CD8-positive, alpha-beta T cell (primary cell): ENCODE measurements at regions of chr6 and their contacts with region 1.

Region 1: GRCh38 chr6:112979830-112980229 is 632.7 kb downstream of the RFPL4B start:
- DNase-seq: no peak
- ATAC-seq: no peak
- H3K4me3 ChIP-seq: no peak overlapping the region
- H3K4me3 Mint-ChIP-seq: no peak overlapping the region
- H3K27ac ChIP-seq: no peak overlapping the region
- H3K27ac Mint-ChIP-seq: no peak overlapping the region
- H3K4me1 ChIP-seq: no peaks in the 10 kb centered on the region
- H3K4me1 Mint-ChIP-seq: no peaks in the 10 kb centered on the region
- H3K27me3 ChIP-seq: no peaks in the 10 kb centered on the region
- H3K27me3 Mint-ChIP-seq: no peaks in the 10 kb centered on the region
- CTCF ChIP-seq: no peak

Region 2: GRCh38 chr6:112936079-112936871 is 43.6 kb before region 1 on chr6:
- CTCF ChIA-PET with region 1: no interaction called
- POLR2A ChIA-PET with region 1: no interaction called
- intact Hi-C with region 1: loop called in 1 of 2 experiments (anchors 1 kb)
- DNase-seq: no peak
- ATAC-seq: no peak
- H3K4me3 ChIP-seq: no peak overlapping the region
- H3K4me3 Mint-ChIP-seq: no peak overlapping the region
- H3K27ac ChIP-seq: no peak overlapping the region
- H3K27ac Mint-ChIP-seq: no peak overlapping the region
- H3K4me1 ChIP-seq: no peaks in the 10 kb centered on the region
- H3K4me1 Mint-ChIP-seq: no peaks in the 10 kb centered on the region
- H3K27me3 ChIP-seq: no peaks in the 10 kb centered on the region
- H3K27me3 Mint-ChIP-seq: no peaks in the 10 kb centered on the region
- CTCF ChIP-seq: no peak